ENCODE measurements at regions of chr11 and their contacts with region 1.

Region 1: GRCh38 chr11:60345489-60345888 is 18.4 kb downstream of the MS4A6E start:
- H3K4me3 ChIP-seq: no peak overlapping the region
- H3K27ac ChIP-seq: no peak overlapping the region
- H3K4me1 ChIP-seq: no peaks in the 10 kb centered on the region
- CTCF ChIP-seq: no peak

Region 2: DNA sequence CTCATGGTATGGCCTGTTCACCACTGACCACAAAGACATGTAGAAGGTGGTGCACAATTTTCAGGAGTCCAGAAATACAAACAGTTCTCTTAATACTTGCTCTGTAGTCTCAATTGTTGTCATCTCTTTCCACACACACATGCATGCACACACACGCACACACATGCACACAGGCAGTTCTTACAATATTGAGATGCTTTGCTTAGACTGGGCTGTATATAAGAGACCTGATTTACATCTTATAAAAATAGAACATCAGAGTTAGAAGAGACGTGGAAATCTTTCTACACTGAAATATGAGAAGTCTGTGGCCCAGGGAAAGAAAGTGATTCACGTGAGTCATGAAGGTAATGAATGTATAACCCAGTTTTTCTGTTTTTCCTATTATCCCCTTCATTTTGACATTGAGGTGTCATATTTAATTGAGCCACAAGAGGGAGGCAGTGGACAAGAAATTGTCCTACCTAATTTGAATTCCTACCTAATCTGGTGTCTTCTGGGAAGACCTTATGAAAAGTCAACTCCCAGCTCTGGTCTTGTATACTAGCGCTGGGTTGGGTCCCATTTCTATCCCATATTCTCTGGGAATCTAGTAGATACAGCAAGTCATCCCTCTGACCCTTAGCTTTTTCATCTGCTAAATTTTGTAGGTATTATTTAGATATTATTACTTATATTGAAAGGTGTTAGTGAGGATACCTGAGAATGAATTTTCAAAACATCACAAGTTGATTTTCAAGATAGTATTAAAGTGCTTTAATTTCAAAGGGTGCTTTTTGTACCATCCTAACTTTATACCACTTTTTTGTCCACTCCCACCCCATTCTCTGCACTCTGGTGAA is 79.9 kb before region 1 on chr11:
- CTCF ChIA-PET with region 1: interaction called, 29 read pairs
- POLR2A ChIA-PET with region 1: no interaction called
- H3K4me3 ChIP-seq: no peak overlapping the region
- H3K27ac ChIP-seq: no peak overlapping the region
- H3K4me1 ChIP-seq: no peaks in the 10 kb centered on the region
- CTCF ChIP-seq: no peak

Region 3: DNA sequence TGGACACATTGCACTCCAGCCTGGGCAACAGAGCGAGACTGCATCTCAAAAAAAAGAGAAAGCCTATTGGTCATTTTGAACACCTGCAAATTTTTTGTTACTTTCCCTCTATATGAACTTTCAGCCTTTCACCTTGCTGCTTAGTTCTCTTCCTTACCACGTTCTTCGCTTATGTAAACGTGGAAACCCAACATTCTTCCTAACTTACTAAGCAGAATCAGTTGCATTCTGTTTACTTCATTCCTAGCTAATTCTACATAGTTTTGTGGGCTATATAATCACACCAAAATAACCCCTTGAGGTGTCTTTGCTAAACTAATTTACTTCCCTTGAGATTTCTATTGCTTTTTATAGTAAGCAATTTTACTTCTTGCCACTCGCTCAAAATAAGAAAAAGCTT is 41.8 kb before region 1 on chr11:
- CTCF ChIA-PET with region 1: interaction called, 10 read pairs
- POLR2A ChIA-PET with region 1: no interaction called
- H3K4me3 ChIP-seq: no peak overlapping the region
- H3K27ac ChIP-seq: no peak overlapping the region
- H3K4me1 ChIP-seq: no peaks in the 10 kb centered on the region
- CTCF ChIP-seq: no peak

Region 4: GRCh38 chr11:60334005-60334620 is 11.4 kb before region 1 on chr11:
- CTCF ChIA-PET with region 1: interaction called, 30 read pairs
- POLR2A ChIA-PET with region 1: no interaction called
- H3K4me3 ChIP-seq: no peak overlapping the region
- H3K27ac ChIP-seq: no peak overlapping the region
- H3K4me1 ChIP-seq: no peaks in the 10 kb centered on the region
- CTCF ChIP-seq: no peak

Region 5: DNA sequence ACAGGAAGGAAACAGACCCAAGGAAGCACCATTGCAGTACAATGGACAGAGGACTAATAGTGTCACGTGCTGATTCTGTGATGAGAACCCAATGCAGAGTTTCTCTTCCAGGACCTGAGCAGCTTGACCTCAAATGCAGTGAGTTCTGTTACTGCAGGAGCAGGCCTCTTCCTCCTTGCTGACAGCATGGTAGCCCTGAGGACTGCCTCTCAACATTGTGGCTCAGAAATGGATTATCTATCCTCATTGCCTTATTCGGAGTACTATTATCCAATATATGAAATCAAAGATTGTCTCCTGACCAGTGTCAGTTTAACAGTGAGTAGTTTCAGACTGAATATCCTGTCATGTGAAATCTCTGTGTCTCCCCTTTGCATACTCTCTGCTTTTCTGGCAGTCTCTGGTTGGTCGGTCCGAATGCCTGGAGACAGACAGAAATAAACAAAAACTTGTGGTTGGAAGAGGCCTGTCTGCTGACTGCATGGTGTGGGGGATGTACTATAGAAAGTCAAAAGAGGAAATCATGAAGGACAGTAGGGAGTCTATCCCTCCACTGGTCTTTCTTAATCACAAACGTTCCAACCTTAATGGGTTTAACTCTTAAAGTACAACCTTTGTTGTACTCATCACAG is 43.9 kb after region 1 on chr11:
- CTCF ChIA-PET with region 1: no interaction called
- POLR2A ChIA-PET with region 1: no interaction called
- H3K4me3 ChIP-seq: no peak overlapping the region
- H3K27ac ChIP-seq: no peak overlapping the region
- H3K4me1 ChIP-seq: no peaks in the 10 kb centered on the region
- CTCF ChIP-seq: no peak

Region 6: DNA sequence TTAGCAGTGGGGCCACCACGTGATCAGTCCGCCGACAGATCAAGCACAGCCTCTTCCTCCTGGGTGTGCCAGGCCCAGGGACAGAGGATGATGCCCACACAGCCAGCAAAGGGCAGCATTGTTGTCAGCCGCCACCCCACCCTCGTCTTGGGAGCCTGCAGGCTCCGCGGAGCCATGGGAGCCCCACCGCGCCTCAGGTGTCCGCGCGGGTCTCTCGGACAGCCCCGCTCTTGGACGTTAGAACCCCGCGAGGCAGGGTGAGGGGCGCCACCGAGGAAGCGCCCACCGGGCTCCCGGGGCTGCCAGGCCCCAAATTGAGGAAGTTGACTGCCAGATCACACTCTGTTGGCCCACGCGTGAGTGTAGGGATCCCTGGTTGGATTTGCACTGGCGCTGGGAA is 270.0 kb after region 1 on chr11:
- CTCF ChIA-PET with region 1: interaction called, 13 read pairs
- POLR2A ChIA-PET with region 1: no interaction called
- H3K4me3 ChIP-seq: no peak overlapping the region
- H3K27ac ChIP-seq: no peak overlapping the region
- H3K4me1 ChIP-seq: no peaks in the 10 kb centered on the region
- CTCF ChIP-seq: no peak

Measured in HEK293 (cell line).